ENCODE measurements at regions of chr1 and their contacts with region 1.

Region 1: DNA sequence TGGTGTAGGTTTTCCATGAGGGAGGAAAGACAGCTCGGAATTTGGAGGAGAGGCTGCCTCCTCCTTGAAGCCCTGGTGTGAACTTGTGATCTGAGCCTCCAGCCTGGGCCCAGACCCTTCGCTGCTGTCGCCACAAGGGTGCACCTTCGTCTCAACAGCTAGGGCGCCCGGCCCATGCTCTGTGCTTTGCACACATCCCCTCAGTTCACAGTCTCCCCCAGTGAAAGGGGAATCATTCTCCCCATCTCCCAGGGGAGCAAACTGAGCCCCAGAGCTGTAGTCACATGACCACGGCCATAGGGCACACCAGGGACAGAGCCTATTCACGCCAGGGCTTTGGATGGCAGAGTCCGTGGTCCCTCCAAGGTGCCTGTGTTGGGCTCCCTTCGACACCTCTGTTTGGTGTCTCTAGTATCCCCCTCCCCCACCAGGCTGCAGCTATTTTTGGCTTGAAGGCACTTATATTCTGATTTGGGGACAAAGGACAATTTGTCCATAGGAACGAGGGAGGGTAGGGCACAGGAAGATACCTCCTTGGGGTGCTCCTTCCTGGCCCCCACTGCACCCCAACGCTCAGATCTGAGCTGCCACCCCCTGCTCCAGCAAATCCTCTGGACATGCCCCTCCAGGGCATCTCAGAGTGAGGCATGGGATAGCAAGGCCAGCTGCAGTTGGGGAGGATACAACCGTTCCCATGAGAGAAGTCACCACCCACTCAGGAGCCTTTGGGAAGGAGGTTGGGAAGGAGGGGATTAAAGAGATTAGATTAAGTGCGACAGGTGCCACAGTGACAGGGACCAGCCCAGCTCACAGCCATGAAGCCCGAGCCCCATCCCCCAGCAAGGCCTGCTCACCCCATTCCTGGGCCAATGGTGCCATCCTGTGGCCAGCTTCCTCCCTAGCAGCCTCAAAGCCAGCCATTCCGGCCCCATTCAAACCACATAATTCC is 15.7 kb downstream of the MATN1 start:
- DNase-seq: no peak
- H3K4me3 ChIP-seq: no peak overlapping the region
- H3K27ac ChIP-seq: no peak overlapping the region
- H3K27me3 ChIP-seq: peaks cover 43% of the 10 kb centered on the region
- CTCF ChIP-seq: peak; percentile 92

Region 2: DNA sequence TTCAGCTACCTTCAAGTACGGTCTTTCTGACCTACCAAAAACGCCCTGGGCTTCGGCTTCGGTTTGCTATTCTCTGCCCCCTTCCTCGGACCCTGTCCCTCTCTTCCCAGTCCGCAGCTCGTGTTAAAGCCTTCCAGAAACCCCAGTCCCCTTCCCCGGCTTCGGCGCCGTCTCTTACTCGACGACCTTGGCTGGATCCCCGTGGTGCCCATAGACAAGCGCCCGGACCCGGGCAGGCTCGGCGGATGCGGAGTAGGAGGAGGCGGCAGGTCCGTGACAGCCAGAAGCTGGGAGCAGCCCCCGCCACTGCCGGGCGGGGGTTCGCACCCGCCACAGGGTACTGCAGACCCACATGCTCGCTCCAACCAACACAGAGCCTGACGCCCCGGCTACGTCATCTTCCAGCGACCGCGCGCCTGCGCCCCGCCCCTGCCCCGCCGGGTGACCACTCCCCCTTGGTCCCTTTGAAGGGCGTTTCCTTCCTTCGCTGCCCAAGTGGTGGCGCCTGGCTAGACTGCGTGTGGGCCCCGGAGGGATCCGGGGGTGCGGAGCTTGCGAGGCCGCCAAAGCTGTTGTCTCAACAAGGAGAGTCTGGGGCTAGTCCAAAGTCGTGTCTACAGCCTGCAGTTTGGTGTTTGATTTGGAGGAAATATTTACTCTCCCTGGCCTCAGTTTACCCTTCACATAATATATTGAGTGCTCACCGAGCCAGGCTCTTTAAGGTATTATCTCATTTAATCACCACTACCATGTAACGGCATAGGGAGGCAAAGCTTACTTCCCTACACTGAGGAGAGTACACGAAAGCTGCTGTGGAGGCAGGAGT is 1476.9 kb before region 1 on chr1 and contains the start of gene MECR:
- CTCF ChIA-PET with region 1: interaction called, 12 read pairs
- POLR2A ChIA-PET with region 1: no interaction called
- DNase-seq: peak; percentile 51
- H3K4me3 ChIP-seq: peak within 1 kb of the TSS; percentile 93
- H3K27ac ChIP-seq: peak within 1 kb of the TSS; percentile 39
- H3K27me3 ChIP-seq: peaks cover 6% of the 10 kb centered on the region
- CTCF ChIP-seq: peak; percentile 24; the same call in 1 of the 2 replicates
- polyA plus RNA-seq, gene MECR: 18.2 and 23.4 TPM in 2 replicates

Region 3: DNA sequence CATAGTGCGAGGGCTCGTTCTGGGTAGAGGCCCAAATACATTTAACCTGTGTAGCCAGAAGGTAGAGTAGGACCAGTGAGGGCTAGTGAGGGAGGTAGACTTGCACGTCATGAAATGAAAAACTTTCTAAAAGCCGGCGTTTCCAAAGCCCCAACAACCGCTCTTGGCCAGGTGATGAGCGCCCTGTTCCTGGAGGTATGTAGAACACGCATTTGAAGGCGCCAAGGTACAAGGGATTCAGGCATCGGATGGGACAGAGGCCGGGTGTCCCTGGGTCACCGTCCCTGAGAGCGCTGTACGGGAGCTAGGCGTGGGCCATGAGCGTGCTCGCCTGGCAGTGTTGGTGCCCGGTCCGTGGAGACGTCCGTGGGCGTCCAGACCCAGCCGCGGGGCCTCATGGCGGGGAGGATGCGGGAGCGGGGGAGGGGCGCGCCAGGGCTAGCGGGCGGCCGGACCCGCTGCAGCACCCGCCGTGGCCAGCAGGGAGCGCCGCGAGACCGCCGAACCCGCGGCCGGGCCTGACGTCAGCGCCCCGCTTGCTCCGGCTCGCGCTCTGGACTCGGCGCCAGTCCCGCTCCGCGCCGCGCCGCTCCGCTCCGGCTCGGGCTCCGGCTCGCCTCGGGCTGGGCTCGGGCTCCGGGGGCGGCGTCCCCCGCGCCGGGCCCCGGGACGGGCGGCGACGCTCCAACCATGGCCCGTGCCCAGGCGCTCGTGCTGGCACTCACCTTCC is 1471.6 kb before region 1 on chr1 and contains the start of gene PTPRU:
- CTCF ChIA-PET with region 1: interaction called, 13 read pairs
- POLR2A ChIA-PET with region 1: no interaction called
- DNase-seq: no peak
- H3K4me3 ChIP-seq: peak within 1 kb of the TSS; percentile 78
- H3K27ac ChIP-seq: no peak within 1 kb of the TSS
- H3K27me3 ChIP-seq: peaks cover 11% of the 10 kb centered on the region
- CTCF ChIP-seq: peak; percentile 43
- polyA plus RNA-seq, gene PTPRU: 7.8 and 9.7 TPM in 2 replicates

Region 4: DNA sequence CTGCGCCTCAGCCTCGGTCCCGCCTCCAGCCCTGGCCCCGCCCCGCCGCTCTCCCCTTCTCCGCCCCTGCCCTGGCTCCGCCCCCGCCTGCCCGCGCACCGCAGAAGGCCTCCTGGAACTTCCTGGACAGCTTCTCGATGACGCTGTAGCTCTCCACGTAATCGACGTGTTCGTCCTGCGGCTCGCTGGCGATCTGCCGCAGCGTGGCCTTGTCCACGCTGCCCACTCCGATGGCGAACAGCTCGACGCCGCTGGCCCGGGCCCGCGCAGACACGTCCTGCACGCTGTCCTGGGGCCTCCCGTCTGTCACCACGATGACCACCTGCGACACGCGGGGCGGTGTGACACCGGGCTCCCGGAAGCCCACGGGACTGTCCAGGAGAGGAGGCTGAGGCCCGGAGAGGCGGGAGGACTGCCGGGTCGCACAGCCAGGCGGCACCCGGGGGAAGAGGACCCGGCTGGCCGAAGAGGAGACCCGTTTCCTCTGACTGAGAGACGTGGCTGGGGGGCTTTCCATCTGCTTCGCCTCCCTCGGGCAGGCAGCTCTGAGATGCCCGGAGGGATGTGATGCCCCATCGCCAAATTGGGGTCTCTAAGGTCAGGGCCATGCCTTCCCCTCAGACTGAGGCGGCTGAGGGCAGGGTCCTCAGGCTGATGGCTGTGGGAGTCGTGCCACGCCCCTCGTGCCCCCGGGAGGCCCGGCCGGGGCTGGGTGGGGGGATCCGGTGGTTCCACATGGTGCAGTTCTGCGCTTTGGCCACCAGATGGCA is 11.1 kb after region 1 on chr1:
- CTCF ChIA-PET with region 1: no interaction called
- POLR2A ChIA-PET with region 1: no interaction called
- DNase-seq: peak; percentile 95
- H3K4me3 ChIP-seq: peak overlapping the region; percentile 66
- H3K27ac ChIP-seq: peak overlapping the region; percentile 99
- H3K27me3 ChIP-seq: no peaks in the 10 kb centered on the region
- CTCF ChIP-seq: peak; percentile 84

Region 5: DNA sequence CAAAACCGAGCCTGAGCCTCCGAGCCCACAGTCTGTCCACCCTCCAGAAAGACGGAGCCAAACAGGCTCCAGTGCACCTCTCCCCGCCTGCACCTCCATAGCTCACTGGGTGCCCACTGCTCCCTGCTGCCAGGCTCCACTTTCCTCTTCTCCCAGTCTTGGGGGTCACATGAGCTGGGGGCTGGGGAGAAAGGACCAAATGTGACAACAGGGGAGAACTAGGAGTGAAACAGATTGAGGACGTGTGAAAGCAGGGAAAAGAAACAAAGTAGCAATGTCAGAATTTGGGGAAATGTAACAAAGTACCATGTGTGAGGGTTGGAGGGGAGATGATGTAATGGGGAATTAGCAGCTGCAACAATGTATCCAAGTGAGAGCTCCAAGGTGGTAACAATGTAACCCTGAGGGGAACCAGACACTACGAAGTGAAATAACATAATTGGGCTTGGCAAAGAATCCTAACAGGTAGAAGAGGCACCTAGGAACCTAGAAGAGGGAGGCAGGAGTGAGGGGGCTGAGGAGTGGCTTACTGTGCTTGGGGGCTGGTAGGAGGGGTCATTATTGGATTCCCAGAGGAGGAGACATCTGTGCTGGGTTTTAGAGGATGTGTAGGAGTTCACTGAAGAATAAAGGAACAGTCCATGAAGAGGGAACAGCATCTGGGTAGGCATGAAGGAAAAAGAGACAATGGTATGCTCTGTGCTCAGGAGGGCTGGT is 188.4 kb after region 1 on chr1:
- CTCF ChIA-PET with region 1: no interaction called
- POLR2A ChIA-PET with region 1: no interaction called
- DNase-seq: no peak
- H3K4me3 ChIP-seq: no peak overlapping the region
- H3K27ac ChIP-seq: no peak overlapping the region
- H3K27me3 ChIP-seq: no peaks in the 10 kb centered on the region
- CTCF ChIP-seq: no peak

Measured in AG04450 (cell line).